HCT116 (cell line): ENCODE measurements at regions of chr17 and their contacts with region 1.

Region 1: GRCh38 chr17:80649678-80650672 is 105.3 kb downstream of the RPTOR start:
- DNase-seq: peak; percentile 63
- ATAC-seq: peak; percentile 98
- H3K4me3 ChIP-seq: no peak overlapping the region
- H3K27ac ChIP-seq: no peak overlapping the region
- H3K4me1 ChIP-seq: peaks cover 6 to 31% of the 10 kb centered on the region in 2 experiments; a peak in 3 of 4 replicates
- H3K27me3 ChIP-seq: no peaks in the 10 kb centered on the region
- CTCF ChIP-seq: peak; percentile 99 to 100 (median 99)
- POLR2A ChIP-seq: no peak
- RAD21 ChIP-seq: peak; percentile 76

Region 2: GRCh38 chr17:80555266-80555665 is 94.7 kb before region 1 on chr17:
- CTCF ChIA-PET with region 1: no interaction called
- POLR2A ChIA-PET with region 1: no interaction called
- RAD21 ChIA-PET with region 1: no interaction called
- intact Hi-C with region 1: no loop called
- DNase-seq: no peak
- ATAC-seq: no peak
- H3K4me3 ChIP-seq: no peak overlapping the region
- H3K27ac ChIP-seq: no peak overlapping the region
- H3K4me1 ChIP-seq: no peaks in the 10 kb centered on the region
- H3K27me3 ChIP-seq: no peaks in the 10 kb centered on the region
- CTCF ChIP-seq: no peak
- POLR2A ChIP-seq: no peak
- RAD21 ChIP-seq: no peak

Region 3: GRCh38 chr17:80565343-80566053 is 84.5 kb before region 1 on chr17:
- CTCF ChIA-PET with region 1: no interaction called
- POLR2A ChIA-PET with region 1: no interaction called
- RAD21 ChIA-PET with region 1: no interaction called
- intact Hi-C with region 1: no loop called
- DNase-seq: no peak
- ATAC-seq: peak; percentile 32; the same call in 1 of the 2 replicates
- H3K4me3 ChIP-seq: no peak overlapping the region
- H3K27ac ChIP-seq: no peak overlapping the region
- H3K4me1 ChIP-seq: no peaks in the 10 kb centered on the region
- H3K27me3 ChIP-seq: no peaks in the 10 kb centered on the region
- CTCF ChIP-seq: no peak
- POLR2A ChIP-seq: no peak
- RAD21 ChIP-seq: no peak

Region 4: GRCh38 chr17:80630560-80631120 is 19.3 kb before region 1 on chr17:
- CTCF ChIA-PET with region 1: interaction called, 14 read pairs
- POLR2A ChIA-PET with region 1: no interaction called
- RAD21 ChIA-PET with region 1: no interaction called
- intact Hi-C with region 1: no loop called
- DNase-seq: no peak
- ATAC-seq: no peak
- H3K4me3 ChIP-seq: no peak overlapping the region
- H3K27ac ChIP-seq: no peak overlapping the region
- H3K4me1 ChIP-seq: peaks cover 2% of the 10 kb centered on the region in 2 experiments
- H3K27me3 ChIP-seq: no peaks in the 10 kb centered on the region
- CTCF ChIP-seq: no peak
- POLR2A ChIP-seq: no peak
- RAD21 ChIP-seq: no peak